IMR-90 (cell line): ENCODE measurements at regions of chr15 and their contacts with region 1.

Region 1: GRCh38 chr15:69394556-69395282 is 19.4 kb upstream of the KIF23 start:
- DNase-seq: peak; percentile 64
- ATAC-seq: peak; percentile 90
- H3K4me3 ChIP-seq: no peak overlapping the region
- H3K27ac ChIP-seq: no peak overlapping the region
- H3K4me1 ChIP-seq: peaks cover 12% of the 10 kb centered on the region
- H3K27me3 ChIP-seq: no peaks in the 10 kb centered on the region
- CTCF ChIP-seq: peak; percentile 90
- POLR2A ChIP-seq: no peak
- RAD21 ChIP-seq: peak; percentile 96

Region 2: DNA sequence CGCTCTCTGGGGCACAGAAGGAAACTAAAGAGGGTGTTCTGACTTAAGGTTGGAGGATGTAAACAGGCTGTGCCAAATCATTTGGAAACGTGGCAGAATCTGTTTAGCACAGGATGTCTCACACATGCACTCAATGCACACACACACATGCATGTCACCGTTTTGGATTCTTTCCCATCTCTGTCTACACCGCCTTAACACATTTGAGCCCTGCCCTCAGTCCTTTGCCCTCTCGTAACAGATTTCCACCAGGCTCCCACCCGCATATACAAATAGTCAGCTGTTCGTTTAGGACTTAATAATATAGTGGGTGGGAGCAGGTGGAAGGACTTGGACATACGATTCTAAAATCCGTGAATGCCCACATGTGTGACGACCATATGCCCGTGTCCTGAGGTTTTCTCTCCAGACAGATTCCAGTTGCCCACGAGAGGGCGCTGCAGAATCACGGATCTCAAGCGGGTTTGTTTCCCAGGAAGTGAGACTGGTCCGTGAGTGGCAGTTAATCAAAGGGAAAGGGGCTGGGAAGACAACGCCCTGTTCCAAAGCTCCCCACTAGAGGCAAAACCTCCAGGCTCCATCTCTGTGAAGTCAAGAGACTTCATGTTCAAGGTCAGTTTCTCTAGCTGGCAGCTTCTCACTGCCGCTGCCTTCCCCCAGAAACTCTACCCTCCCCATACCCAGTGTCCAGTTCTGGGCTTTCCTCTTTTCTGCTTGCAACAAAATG is 335.7 kb before region 1 on chr15:
- CTCF ChIA-PET with region 1: interaction called, 3 read pairs
- POLR2A ChIA-PET with region 1: no interaction called
- dilution Hi-C with region 1: no loop called
- in situ Hi-C with region 1: loop called (anchors 5 kb)
- intact Hi-C with region 1: loop called (anchors 1 kb)
- DNase-seq: peak; percentile 81
- ATAC-seq: peak; percentile 92
- H3K4me3 ChIP-seq: no peak overlapping the region
- H3K27ac ChIP-seq: no peak overlapping the region
- H3K4me1 ChIP-seq: no peaks in the 10 kb centered on the region; the same call in 1 of the 2 replicates
- H3K27me3 ChIP-seq: peaks cover 29% of the 10 kb centered on the region
- CTCF ChIP-seq: peak; percentile 88
- POLR2A ChIP-seq: peak; percentile 37
- RAD21 ChIP-seq: peak; percentile 98

Region 3: GRCh38 chr15:69160141-69160993 is 234.4 kb before region 1 on chr15 and contains the start of gene GLCE:
- CTCF ChIA-PET with region 1: interaction called, 7 read pairs
- POLR2A ChIA-PET with region 1: no interaction called
- dilution Hi-C with region 1: no loop called
- in situ Hi-C with region 1: no loop called
- intact Hi-C with region 1: loop called (anchors 1 kb)
- DNase-seq: peak; percentile 95
- ATAC-seq: peak; percentile 98
- H3K4me3 ChIP-seq: peak within 1 kb of the TSS; percentile 84
- H3K27ac ChIP-seq: peak within 1 kb of the TSS; percentile 87
- H3K4me1 ChIP-seq: peaks cover 2% of the 10 kb centered on the region; the same call in 1 of the 2 replicates
- H3K27me3 ChIP-seq: no peaks in the 10 kb centered on the region
- CTCF ChIP-seq: no peak
- POLR2A ChIP-seq: peak; percentile 92
- RAD21 ChIP-seq: peak; percentile 19; the same call in 1 of the 2 replicates
- total RNA-seq, gene GLCE: 29.6 and 38.0 TPM in 2 replicates

Region 4: DNA sequence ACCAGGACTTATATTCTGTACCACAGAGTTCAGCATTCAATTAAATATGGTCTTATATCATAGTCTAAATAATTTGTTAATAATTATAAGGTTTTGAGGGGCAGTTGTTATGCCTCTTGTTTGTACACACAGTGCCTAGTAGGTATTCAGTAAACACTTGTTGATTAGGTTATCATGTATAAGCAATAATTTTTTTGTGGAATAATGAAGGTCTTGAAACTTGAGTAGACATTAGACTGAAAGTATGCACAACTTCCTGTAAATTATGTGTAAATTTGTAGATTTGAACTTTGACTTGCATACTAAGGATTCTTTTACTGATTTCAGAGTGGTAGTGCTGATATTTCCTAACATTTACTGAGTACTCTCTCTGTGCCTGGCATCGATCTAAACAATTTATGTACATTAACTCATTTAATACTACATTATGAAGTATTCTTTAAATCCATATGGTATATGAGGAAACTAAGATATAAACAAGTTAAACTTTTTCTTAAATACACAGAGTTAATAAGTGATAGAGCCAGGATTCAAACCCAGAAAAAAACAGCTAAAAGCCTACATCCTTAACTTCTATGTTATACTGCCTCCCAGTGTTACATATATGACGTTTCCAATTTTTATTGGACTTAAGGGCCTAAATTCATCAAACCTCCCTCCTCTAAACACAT is 169.2 kb before region 1 on chr15:
- CTCF ChIA-PET with region 1: no interaction called
- POLR2A ChIA-PET with region 1: no interaction called
- dilution Hi-C with region 1: no loop called
- in situ Hi-C with region 1: no loop called
- intact Hi-C with region 1: loop called (anchors 5 kb)
- DNase-seq: peak; percentile 67
- ATAC-seq: peak; percentile 71
- H3K4me3 ChIP-seq: no peak overlapping the region
- H3K27ac ChIP-seq: no peak overlapping the region
- H3K4me1 ChIP-seq: no peaks in the 10 kb centered on the region; the same call in 1 of the 2 replicates
- H3K27me3 ChIP-seq: no peaks in the 10 kb centered on the region
- CTCF ChIP-seq: peak; percentile 70
- POLR2A ChIP-seq: no peak
- RAD21 ChIP-seq: peak; percentile 72

Region 5: GRCh38 chr15:69289342-69290146 is 105.2 kb before region 1 on chr15:
- CTCF ChIA-PET with region 1: interaction called, 4 read pairs
- POLR2A ChIA-PET with region 1: interaction called, 11 read pairs
- dilution Hi-C with region 1: no loop called
- in situ Hi-C with region 1: no loop called
- intact Hi-C with region 1: no loop called
- DNase-seq: peak; percentile 23
- ATAC-seq: peak; percentile 81
- H3K4me3 ChIP-seq: no peak overlapping the region
- H3K27ac ChIP-seq: peak overlapping the region; percentile 60; the same call in 1 of the 2 replicates
- H3K4me1 ChIP-seq: peaks cover 16% of the 10 kb centered on the region; the same call in 1 of the 2 replicates
- H3K27me3 ChIP-seq: peaks cover 2% of the 10 kb centered on the region; the same call in 1 of the 2 replicates
- CTCF ChIP-seq: no peak
- POLR2A ChIP-seq: no peak
- RAD21 ChIP-seq: no peak

Region 6: GRCh38 chr15:69303337-69304175 is 91.2 kb before region 1 on chr15:
- CTCF ChIA-PET with region 1: interaction called, 5 read pairs
- POLR2A ChIA-PET with region 1: interaction called, 4 read pairs
- dilution Hi-C with region 1: no loop called
- in situ Hi-C with region 1: no loop called
- intact Hi-C with region 1: loop called (anchors 1 kb)
- DNase-seq: peak; percentile 55
- ATAC-seq: no peak; the same call in 1 of the 2 replicates
- H3K4me3 ChIP-seq: no peak overlapping the region
- H3K27ac ChIP-seq: peak overlapping the region; percentile 59
- H3K4me1 ChIP-seq: peaks cover 25% of the 10 kb centered on the region
- H3K27me3 ChIP-seq: peaks cover 12% of the 10 kb centered on the region; the same call in 1 of the 2 replicates
- CTCF ChIP-seq: peak; percentile 34
- POLR2A ChIP-seq: no peak
- RAD21 ChIP-seq: no peak

Region 7: DNA sequence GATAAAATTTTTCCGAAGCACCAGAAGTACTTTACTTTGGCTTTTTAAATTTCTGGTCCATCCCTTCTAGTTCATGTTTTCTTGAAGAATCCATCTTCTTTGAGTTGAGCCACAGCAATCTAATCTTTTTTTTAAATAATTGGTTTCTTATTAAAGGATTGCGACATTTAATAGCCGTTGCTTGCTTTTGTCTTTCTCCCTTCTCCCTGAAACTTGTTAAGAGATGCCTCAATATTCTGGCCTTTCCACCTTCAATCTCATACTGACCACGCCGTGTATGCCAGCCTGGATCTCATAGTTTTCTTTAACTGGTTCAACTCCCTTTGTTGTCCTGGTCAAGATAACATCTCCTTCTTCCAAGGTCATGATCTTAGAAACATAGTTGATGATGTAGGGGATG is 39.5 kb after region 1 on chr15:
- CTCF ChIA-PET with region 1: no interaction called
- POLR2A ChIA-PET with region 1: no interaction called
- dilution Hi-C with region 1: no loop called
- in situ Hi-C with region 1: no loop called
- intact Hi-C with region 1: loop called (anchors 1 kb)
- DNase-seq: no peak
- ATAC-seq: no peak
- H3K4me3 ChIP-seq: no peak overlapping the region
- H3K27ac ChIP-seq: no peak overlapping the region
- H3K4me1 ChIP-seq: no peaks in the 10 kb centered on the region
- H3K27me3 ChIP-seq: no peaks in the 10 kb centered on the region
- CTCF ChIP-seq: no peak
- POLR2A ChIP-seq: no peak
- RAD21 ChIP-seq: no peak